Activated CD4-positive, alpha-beta memory T cell treated with anti-CD3 and anti-CD28 coated beads for 36 hours (primary cell): ENCODE measurements at regions of chr22 and their contacts with region 1.

Region 1: DNA sequence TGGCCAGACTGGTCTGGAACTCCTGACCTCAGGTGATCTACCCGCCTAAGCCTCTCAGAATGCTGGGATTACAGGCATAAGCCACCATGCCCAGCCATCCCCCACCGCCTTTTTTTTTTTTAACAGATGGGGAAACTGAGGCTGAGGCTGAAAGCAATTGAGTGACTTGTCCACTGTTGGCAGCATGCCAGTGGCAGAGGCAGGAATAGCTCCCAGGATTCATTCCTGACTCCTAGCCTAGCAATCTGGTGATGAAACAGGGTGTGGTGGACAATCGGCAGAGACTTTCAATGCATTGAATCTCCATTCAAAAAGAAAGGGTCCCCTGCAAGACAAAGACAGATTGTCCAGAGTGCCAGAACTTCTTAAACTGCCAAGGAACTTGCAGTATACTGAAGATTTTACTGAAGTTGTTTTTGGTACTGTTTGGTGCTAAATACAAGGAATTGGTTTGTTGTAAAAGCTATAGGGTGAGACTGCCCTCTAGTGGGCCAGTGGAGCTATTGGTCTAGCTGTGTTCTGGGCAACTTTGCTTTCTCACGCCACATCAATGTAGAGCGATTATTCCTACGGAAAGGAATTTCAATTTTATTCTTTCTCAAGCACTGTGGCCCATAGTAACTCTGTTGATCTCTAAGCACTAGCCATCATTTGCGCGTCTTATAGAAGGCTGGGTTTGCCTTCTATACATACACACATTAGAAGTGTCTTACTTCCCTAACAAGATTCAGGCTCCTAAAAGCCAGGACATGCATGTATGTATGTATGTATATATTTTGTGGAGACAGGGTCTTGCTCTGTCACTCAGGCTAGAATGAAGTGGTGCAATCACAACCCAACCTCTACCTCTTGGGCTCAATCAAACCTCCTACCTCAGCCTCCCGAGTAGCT is 21.0 kb downstream of the C22orf31 start:
- DNase-seq: peak; percentile 65
- H3K4me3 Mint-ChIP-seq: no peak overlapping the region
- H3K27ac Mint-ChIP-seq: no peak overlapping the region
- H3K4me1 Mint-ChIP-seq: no peaks in the 10 kb centered on the region
- H3K27me3 Mint-ChIP-seq: peaks cover 1% of the 10 kb centered on the region

Region 2: GRCh38 chr22:28600546-28601143 is 440.0 kb before region 1 on chr22:
- CTCF ChIA-PET with region 1: interaction called, 67 read pairs
- POLR2A ChIA-PET with region 1: no interaction called
- intact Hi-C with region 1: loop called (anchors 1 kb)
- DNase-seq: no peak
- H3K4me3 Mint-ChIP-seq: no peak overlapping the region
- H3K27ac Mint-ChIP-seq: no peak overlapping the region
- H3K4me1 Mint-ChIP-seq: no peaks in the 10 kb centered on the region
- H3K27me3 Mint-ChIP-seq: peaks cover 10% of the 10 kb centered on the region

Region 3: GRCh38 chr22:28855355-28856094 is 185.1 kb before region 1 on chr22:
- CTCF ChIA-PET with region 1: interaction called, 173 read pairs
- POLR2A ChIA-PET with region 1: interaction called, 8 read pairs
- intact Hi-C with region 1: loop called (anchors 1 kb)
- DNase-seq: peak; percentile 38
- H3K4me3 Mint-ChIP-seq: no peak overlapping the region
- H3K27ac Mint-ChIP-seq: no peak overlapping the region
- H3K4me1 Mint-ChIP-seq: no peaks in the 10 kb centered on the region
- H3K27me3 Mint-ChIP-seq: no peaks in the 10 kb centered on the region

Region 4: GRCh38 chr22:28864878-28865596 is 175.6 kb before region 1 on chr22:
- CTCF ChIA-PET with region 1: interaction called, 10 read pairs
- POLR2A ChIA-PET with region 1: no interaction called
- intact Hi-C with region 1: no loop called
- DNase-seq: no peak
- H3K4me3 Mint-ChIP-seq: no peak overlapping the region
- H3K27ac Mint-ChIP-seq: no peak overlapping the region
- H3K4me1 Mint-ChIP-seq: no peaks in the 10 kb centered on the region
- H3K27me3 Mint-ChIP-seq: no peaks in the 10 kb centered on the region

Region 5: DNA sequence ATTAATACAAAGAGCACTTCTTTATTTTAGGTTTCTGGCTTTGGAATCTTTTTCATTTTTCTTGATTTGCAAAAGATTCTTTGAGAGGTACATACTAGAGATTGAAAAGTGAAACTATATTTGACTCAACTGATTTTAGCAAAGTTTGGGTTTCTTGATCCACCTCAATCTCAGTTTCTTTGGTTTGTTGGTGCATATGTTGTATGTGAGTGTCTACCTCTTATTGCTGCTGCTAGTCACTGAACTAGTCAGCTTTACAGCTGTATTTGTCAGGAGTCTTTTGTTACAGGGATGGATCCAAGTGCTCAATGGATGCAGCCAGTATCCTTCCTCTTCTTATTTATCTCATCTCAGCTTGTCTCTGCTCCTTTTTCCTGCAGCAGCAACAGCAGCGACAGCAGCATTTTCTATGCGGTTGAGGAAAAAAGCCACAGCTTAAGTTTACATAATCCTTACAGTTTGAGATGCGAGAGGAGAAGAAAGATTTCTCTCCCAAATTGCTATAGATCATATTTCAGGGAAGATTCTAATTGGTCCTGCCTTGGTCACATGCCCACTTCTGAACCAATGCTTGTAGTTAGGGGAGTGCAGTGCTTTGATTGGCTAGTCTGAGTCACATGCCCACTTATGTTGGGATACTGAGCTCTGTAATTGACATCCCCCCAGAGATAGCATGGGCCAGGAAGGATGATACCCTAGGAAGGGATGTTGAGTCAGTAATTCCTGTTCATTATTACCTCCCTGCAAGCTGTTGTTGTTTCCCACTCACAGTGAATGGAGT is 167.3 kb before region 1 on chr22:
- CTCF ChIA-PET with region 1: interaction called, 14 read pairs
- POLR2A ChIA-PET with region 1: no interaction called
- intact Hi-C with region 1: no loop called
- DNase-seq: no peak
- H3K4me3 Mint-ChIP-seq: no peak overlapping the region
- H3K27ac Mint-ChIP-seq: no peak overlapping the region
- H3K4me1 Mint-ChIP-seq: peaks cover 8% of the 10 kb centered on the region
- H3K27me3 Mint-ChIP-seq: no peaks in the 10 kb centered on the region

Region 6: DNA sequence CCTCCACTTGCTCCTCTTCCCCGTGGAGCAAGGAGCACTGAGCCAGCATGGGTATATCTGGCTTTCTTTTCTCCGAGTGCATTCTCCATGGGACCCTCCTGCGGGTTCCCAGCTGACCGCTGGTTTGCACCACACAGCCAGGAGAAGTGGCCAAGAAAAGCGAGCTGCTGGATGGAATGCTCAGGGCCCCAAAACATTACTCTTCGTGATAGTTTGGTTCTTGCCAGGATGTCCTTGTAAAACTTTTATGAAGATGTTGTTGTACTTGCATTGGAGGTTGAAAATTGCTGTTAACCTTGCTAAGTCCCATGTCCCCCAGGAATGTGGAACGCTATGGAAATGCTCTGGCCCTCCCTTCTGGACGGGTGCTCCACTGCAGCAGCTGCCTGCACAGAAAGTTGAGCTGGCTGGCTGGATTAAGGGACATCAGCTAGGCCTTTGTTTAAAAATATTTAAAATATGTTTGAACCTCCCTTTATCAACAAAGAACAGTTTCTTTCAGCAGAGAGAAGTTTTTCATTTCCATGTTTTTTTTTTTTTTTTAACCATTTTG is 88.6 kb before region 1 on chr22:
- CTCF ChIA-PET with region 1: no interaction called
- POLR2A ChIA-PET with region 1: no interaction called
- intact Hi-C with region 1: no loop called
- DNase-seq: no peak
- H3K4me3 Mint-ChIP-seq: no peak overlapping the region
- H3K27ac Mint-ChIP-seq: no peak overlapping the region
- H3K4me1 Mint-ChIP-seq: peaks cover 17% of the 10 kb centered on the region
- H3K27me3 Mint-ChIP-seq: peaks cover 64% of the 10 kb centered on the region

Region 7: DNA sequence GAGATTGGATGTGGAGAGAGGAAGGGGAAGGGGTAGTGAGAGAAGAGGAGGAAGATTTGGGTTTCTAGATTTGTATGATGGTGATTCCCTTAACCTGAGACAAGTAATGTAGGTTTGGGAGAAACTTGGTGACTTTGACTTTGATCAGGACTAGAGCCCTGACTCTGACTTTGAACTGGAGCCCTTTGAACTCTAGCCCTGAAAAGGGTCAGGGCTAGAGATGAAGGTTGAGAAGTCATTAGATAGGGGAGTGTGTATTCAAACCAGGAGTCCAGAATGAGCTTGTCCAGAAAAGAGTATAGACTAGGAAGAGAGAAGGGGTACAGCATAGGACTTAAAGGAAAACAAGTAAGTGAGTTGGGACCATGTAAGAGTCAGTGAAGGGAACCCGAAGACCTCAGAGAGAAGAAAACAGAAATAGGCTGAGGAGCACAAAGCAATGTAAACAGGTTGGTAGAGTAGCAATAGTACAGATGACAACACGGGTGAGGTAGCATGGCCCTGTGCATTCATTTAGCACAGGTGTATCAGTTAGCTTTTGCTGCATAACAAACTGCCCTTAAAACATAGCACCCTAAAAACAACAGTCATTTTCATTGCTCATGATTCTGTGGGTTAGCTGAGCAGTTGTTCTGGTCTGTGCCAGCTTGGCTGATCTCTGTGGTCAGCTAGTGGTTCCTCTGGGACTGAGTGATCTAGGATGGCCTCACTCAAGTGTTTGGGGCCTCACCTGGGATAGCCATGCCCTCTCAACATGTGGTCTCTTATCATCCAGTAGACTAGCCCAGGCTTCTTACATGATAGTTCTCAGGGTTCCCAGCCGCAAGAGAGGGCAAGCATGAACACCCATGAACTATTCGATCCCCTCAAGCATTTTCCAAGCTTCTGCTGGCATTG is 22.1 kb before region 1 on chr22:
- CTCF ChIA-PET with region 1: interaction called, 10 read pairs
- POLR2A ChIA-PET with region 1: no interaction called
- intact Hi-C with region 1: no loop called
- DNase-seq: no peak
- H3K4me3 Mint-ChIP-seq: no peak overlapping the region
- H3K27ac Mint-ChIP-seq: no peak overlapping the region
- H3K4me1 Mint-ChIP-seq: peaks cover 7% of the 10 kb centered on the region
- H3K27me3 Mint-ChIP-seq: no peaks in the 10 kb centered on the region

Region 8: DNA sequence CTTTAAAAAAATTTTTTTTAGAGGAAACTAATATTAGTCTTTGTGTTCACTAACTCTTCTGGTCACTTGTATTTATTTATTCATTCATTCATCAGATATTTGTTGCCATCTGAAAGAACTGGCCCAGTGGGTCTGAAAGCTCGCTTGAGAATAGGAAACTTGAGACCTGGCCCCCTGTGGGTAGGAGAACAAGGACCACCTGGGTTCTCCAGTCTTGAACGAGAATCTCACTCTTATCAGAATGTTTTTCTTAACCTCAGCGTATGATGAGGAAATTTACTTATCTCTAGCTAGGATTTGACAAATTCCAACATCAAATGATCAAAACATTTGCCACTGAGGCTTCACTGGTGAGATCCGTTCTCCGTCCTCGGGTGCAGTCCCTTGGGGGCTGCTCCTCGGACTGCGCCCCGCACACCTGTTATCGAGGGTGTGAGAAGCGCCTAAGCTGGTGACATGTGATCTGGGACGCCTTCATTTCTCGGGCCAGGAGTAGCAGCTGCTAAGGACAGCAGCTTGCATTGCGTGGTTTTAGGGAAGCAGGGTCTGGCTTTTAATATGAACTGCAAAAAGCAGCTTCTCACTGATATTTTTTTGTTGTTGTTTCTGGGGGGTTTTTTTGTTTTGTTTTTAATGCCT is 14.7 kb after region 1 on chr22:
- CTCF ChIA-PET with region 1: interaction called, 21 read pairs
- POLR2A ChIA-PET with region 1: no interaction called
- intact Hi-C with region 1: no loop called
- DNase-seq: no peak
- H3K4me3 Mint-ChIP-seq: no peak overlapping the region
- H3K27ac Mint-ChIP-seq: no peak overlapping the region
- H3K4me1 Mint-ChIP-seq: no peaks in the 10 kb centered on the region
- H3K27me3 Mint-ChIP-seq: peaks cover 1% of the 10 kb centered on the region

Region 9: DNA sequence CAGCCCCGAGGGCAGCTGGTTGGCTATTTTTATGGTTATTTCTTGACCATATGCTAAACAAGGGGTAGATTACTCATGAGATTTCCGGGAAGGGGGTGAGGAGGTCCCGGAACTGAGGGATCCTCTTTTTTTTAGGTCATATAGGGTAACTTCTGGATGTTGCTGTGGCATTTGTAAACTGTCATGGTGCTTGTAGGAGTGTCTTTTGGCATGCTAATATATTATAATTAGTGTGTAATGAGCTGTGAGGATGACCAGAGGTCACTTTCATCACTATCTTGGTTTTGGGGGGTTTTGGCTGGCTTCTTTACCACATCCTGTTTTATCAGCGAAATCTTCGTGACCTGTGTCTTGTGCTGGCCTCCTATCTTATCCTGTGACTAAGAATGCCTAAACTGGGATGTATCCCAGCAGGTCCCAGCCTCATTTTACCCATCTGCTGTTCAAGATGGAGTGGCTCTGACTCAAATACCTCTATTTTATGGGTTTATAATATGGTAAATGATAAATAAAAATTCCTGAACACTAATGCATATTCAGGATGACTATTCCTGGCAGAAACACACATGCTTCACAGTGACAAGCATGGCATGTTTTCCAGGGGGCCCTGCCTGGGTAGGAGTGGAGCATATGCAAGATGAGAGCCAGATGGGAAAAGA is 43.4 kb after region 1 on chr22:
- CTCF ChIA-PET with region 1: no interaction called
- POLR2A ChIA-PET with region 1: no interaction called
- intact Hi-C with region 1: no loop called
- DNase-seq: no peak
- H3K4me3 Mint-ChIP-seq: no peak overlapping the region
- H3K27ac Mint-ChIP-seq: no peak overlapping the region
- H3K4me1 Mint-ChIP-seq: no peaks in the 10 kb centered on the region
- H3K27me3 Mint-ChIP-seq: peaks cover 11% of the 10 kb centered on the region